Activated B cell treated with CpG ODN at 0.5 μM for 24 hours (primary cell): ENCODE measurements at regions of chr10 and their contacts with region 1.

Region 1: GRCh38 chr10:6300106-6300783 is 97.5 kb downstream of the PFKFB3 start:
- DNase-seq: peak; percentile 48
- ATAC-seq: peak; percentile 80
- H3K4me3 Mint-ChIP-seq: peak overlapping the region; percentile 75
- H3K27ac Mint-ChIP-seq: peak overlapping the region; percentile 96
- H3K4me1 Mint-ChIP-seq: peaks cover 82% of the 10 kb centered on the region
- H3K27me3 Mint-ChIP-seq: no peaks in the 10 kb centered on the region
- CTCF ChIP-seq: no peak

Region 2: DNA sequence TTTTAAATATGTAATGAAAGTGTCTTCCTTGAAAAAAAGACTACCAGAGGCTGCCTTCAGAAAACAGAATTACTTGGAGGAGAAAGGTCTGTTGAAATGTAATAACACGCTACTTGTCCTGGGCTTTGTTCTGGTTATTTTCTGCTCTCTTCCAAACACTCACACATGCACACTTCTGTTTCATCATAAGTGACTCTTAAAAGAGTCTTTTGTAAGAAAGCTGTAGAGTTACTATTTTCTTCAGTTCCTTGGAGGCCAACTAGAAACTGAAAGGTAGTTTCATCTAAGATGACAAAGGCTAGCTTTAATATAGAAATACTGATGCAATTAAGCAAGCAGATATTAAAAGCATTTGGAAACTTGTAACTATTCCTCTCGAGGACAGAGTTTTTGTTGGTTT is 576.6 kb before region 1 on chr10:
- CTCF ChIA-PET with region 1: no interaction called
- POLR2A ChIA-PET with region 1: no interaction called
- intact Hi-C with region 1: no loop called
- DNase-seq: no peak
- ATAC-seq: no peak
- H3K4me3 Mint-ChIP-seq: no peak overlapping the region
- H3K27ac Mint-ChIP-seq: no peak overlapping the region
- H3K4me1 Mint-ChIP-seq: peaks cover 2% of the 10 kb centered on the region
- H3K27me3 Mint-ChIP-seq: no peaks in the 10 kb centered on the region
- CTCF ChIP-seq: no peak

Region 3: DNA sequence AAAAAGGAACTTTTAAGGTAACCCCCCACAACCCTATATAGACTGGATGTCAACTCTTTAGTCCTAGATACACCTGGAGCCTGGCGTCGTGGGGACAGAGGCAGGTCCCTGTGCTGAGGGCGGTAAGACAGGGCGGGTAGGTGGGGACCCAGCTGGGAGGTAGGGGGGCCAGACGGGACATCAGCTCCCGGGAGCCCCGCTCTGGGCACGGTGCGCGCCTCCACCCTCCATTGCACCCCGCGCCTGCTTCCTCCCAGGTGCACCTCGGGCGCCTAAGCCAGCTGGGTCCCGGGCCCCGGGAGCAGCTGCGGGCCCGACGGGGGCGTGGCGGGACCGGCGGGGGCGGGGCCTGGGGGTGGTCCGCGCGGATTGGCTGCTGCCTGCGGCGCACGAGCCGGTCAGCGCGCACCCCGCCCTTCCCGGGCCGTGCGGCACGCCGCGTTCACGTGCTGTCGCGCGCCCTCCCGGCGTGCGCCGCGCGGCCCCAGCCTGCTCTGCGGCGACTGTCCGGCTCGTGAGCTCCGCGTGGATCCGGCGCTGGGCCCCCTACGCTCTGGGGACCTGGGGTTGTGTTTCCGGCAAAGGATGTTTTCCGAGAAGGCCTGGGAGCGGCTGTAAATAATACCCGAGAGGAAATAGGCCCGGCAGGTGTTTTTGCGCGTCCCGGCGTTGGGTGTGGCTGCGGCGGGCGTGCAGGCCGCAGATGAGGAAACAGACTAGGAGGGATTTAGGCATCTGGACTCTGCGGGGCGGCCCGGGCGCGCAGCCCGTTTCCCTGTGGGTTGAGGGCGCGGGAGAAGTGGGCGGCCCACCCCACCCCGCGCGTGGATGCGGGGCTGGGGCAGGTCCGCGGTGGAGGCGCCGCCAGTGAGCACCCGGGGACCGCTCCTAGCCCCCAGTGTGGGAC is 136.6 kb before region 1 on chr10:
- CTCF ChIA-PET with region 1: no interaction called
- POLR2A ChIA-PET with region 1: interaction called, 4 read pairs
- intact Hi-C with region 1: loop called (anchors 1 kb)
- DNase-seq: peak; percentile 90
- ATAC-seq: peak; percentile 98
- H3K4me3 Mint-ChIP-seq: peak overlapping the region; percentile 96
- H3K27ac Mint-ChIP-seq: peak overlapping the region; percentile 97
- H3K4me1 Mint-ChIP-seq: peaks cover 34% of the 10 kb centered on the region
- H3K27me3 Mint-ChIP-seq: no peaks in the 10 kb centered on the region
- CTCF ChIP-seq: no peak

Region 4: DNA sequence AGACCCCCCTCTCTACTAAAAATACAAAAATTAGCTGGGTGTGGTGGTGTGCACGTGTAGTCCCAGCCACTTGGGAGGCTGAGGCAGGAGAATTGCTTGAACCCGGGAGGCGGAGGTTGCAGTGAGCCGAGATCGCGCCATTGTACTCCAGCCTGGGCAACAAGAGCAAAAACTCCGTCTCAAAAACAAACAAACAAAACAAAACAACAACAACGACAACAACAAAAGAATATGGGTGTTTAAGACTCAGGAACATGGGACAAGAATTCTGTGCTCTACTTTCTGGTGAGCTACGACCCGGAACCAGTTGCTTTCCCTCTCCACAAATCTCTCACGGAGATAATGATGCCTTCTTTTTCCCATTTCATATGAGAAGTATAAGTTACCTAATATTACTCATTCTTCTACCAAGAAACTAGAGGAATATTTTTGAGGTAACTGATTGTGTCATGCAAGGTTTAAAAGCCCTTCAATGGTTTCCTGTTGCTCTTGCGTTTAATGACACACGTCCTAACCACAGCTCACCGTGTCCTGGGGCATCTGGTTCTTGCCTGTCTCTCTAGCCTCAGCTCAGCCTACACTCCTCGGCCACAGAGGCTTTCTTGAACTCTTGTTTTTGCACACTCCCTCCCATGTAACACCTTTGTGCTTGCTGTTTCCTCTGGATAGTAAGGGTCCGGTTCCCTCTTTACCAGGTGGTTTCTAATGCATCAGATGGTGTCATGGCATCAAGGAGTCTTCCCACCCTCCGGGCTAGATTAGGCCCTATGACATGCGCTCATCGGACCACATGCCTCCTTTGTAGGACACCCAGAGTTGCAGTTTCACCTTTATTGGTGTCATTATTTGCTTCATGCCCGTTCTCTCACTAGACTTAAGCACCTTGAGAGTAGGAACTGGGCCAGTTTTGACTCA is 30.0 kb before region 1 on chr10:
- CTCF ChIA-PET with region 1: interaction called, 3 read pairs
- POLR2A ChIA-PET with region 1: interaction called, 23 read pairs
- intact Hi-C with region 1: loop called (anchors 1 kb)
- DNase-seq: peak; percentile 19
- ATAC-seq: peak; percentile 49
- H3K4me3 Mint-ChIP-seq: peak overlapping the region; percentile 24
- H3K27ac Mint-ChIP-seq: peak overlapping the region; percentile 73
- H3K4me1 Mint-ChIP-seq: peaks cover 35% of the 10 kb centered on the region
- H3K27me3 Mint-ChIP-seq: no peaks in the 10 kb centered on the region
- CTCF ChIP-seq: no peak

Region 5: GRCh38 chr10:6313107-6313895 is 13.1 kb after region 1 on chr10:
- CTCF ChIA-PET with region 1: no interaction called
- POLR2A ChIA-PET with region 1: interaction called, 14 read pairs
- intact Hi-C with region 1: no loop called
- DNase-seq: no peak
- ATAC-seq: no peak
- H3K4me3 Mint-ChIP-seq: no peak overlapping the region
- H3K27ac Mint-ChIP-seq: no peak overlapping the region
- H3K4me1 Mint-ChIP-seq: peaks cover 13% of the 10 kb centered on the region
- H3K27me3 Mint-ChIP-seq: no peaks in the 10 kb centered on the region
- CTCF ChIP-seq: no peak

Region 6: GRCh38 chr10:6382081-6382480 is 81.8 kb after region 1 on chr10:
- CTCF ChIA-PET with region 1: interaction called, 6 read pairs
- POLR2A ChIA-PET with region 1: interaction called, 20 read pairs
- intact Hi-C with region 1: loop called (anchors 1 kb)
- DNase-seq: no peak
- ATAC-seq: peak; percentile 90
- H3K4me3 Mint-ChIP-seq: peak overlapping the region; percentile 72
- H3K27ac Mint-ChIP-seq: peak overlapping the region; percentile 82
- H3K4me1 Mint-ChIP-seq: peaks cover 25% of the 10 kb centered on the region
- H3K27me3 Mint-ChIP-seq: no peaks in the 10 kb centered on the region
- CTCF ChIP-seq: no peak